PC-9 (cell line): ENCODE measurements at regions of chr12 and their contacts with region 1.

Region 1: GRCh38 chr12:117212563-117213190 is 22.4 kb upstream of the FBXO21 start:
- DNase-seq: peak; percentile 53 to 62
- H3K4me3 ChIP-seq: no peak overlapping the region
- H3K27ac ChIP-seq: no peak overlapping the region
- H3K4me1 ChIP-seq: no peaks in the 10 kb centered on the region
- H3K27me3 ChIP-seq: peaks cover 94% of the 10 kb centered on the region
- CTCF ChIP-seq: peak; percentile 92

Region 2: GRCh38 chr12:117587631-117588287 is 375.1 kb after region 1 on chr12:
- CTCF ChIA-PET with region 1: no interaction called
- POLR2A ChIA-PET with region 1: no interaction called
- intact Hi-C with region 1: loop called (anchors 2 kb)
- DNase-seq: peak in 1 of 2 experiments; percentile 31
- H3K4me3 ChIP-seq: no peak overlapping the region
- H3K27ac ChIP-seq: no peak overlapping the region
- H3K4me1 ChIP-seq: no peaks in the 10 kb centered on the region
- H3K27me3 ChIP-seq: peaks cover 31% of the 10 kb centered on the region
- CTCF ChIP-seq: peak; percentile 85

Region 3: GRCh38 chr12:117836999-117837736 is 624.5 kb after region 1 on chr12:
- CTCF ChIA-PET with region 1: no interaction called
- POLR2A ChIA-PET with region 1: no interaction called
- intact Hi-C with region 1: loop called (anchors 1 kb)
- DNase-seq: peak; percentile 66 to 69
- H3K4me3 ChIP-seq: no peak overlapping the region
- H3K27ac ChIP-seq: no peak overlapping the region
- H3K4me1 ChIP-seq: no peaks in the 10 kb centered on the region
- H3K27me3 ChIP-seq: 0 out of 2 replicates have a peak, but pooled peaks cover 5% of the 10 kb centered on the region
- CTCF ChIP-seq: peak; percentile 99

Region 4: DNA sequence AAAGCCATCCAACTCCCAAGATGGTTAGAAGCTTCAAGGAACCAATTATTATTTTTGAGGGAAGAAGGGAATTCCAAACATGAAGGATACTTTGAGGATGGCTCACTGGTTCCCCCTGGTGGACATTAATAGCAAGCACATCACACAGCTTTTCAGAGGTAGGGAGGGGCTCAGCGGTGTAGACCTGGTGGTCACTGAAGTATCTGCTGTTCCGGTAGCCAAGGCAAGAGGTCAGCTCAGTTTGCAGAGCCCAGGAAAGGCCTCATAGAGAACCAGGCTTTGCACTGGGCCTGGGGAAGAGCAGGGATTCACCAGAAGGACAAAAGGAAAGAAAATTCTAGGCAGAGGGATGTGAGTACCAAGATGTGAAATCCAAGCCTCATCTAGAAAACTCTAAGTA is 637.4 kb after region 1 on chr12:
- CTCF ChIA-PET with region 1: no interaction called
- POLR2A ChIA-PET with region 1: no interaction called
- intact Hi-C with region 1: loop called (anchors 5 kb)
- DNase-seq: peak in 1 of 2 experiments; percentile 36
- H3K4me3 ChIP-seq: no peak overlapping the region
- H3K27ac ChIP-seq: no peak overlapping the region
- H3K4me1 ChIP-seq: peaks cover 18% of the 10 kb centered on the region
- H3K27me3 ChIP-seq: no peaks in the 10 kb centered on the region
- CTCF ChIP-seq: peak; percentile 88